ENCODE measurements at regions of chr6 and their contacts with region 1.

Region 1: GRCh38 chr6:31139599-31139998 is 733 bp upstream of the PSORS1C2 start:
- DNase-seq: no peak
- H3K4me3 ChIP-seq: no peak overlapping the region
- H3K27ac ChIP-seq: no peak overlapping the region
- H3K4me1 ChIP-seq: peaks cover 24% of the 10 kb centered on the region
- H3K27me3 ChIP-seq: no peaks in the 10 kb centered on the region
- CTCF ChIP-seq: no peak

Region 2: GRCh38 chr6:30990422-30991086 is 149.0 kb before region 1 on chr6:
- CTCF ChIA-PET with region 1: no interaction called
- dilution Hi-C with region 1: no loop called
- in situ Hi-C with region 1: no loop called
- intact Hi-C with region 1: no loop called
- DNase-seq: no peak
- H3K4me3 ChIP-seq: no peak overlapping the region
- H3K27ac ChIP-seq: no peak overlapping the region
- H3K4me1 ChIP-seq: no peaks in the 10 kb centered on the region
- H3K27me3 ChIP-seq: no peaks in the 10 kb centered on the region
- CTCF ChIP-seq: no peak

Region 3: GRCh38 chr6:31366693-31367470 is 227.3 kb after region 1 on chr6:
- CTCF ChIA-PET with region 1: no interaction called
- dilution Hi-C with region 1: no loop called
- in situ Hi-C with region 1: loop called (anchors 5 to 10 kb)
- intact Hi-C with region 1: loop called (anchors 1 kb)
- DNase-seq: peak; percentile 85
- H3K4me3 ChIP-seq: peak overlapping the region in 2 of 3 experiments; percentile 23 to 44
- H3K27ac ChIP-seq: no peak overlapping the region
- H3K4me1 ChIP-seq: peaks cover 4% of the 10 kb centered on the region
- H3K27me3 ChIP-seq: peaks cover 2% of the 10 kb centered on the region
- CTCF ChIP-seq: peak; percentile 71 to 91

Measured in mammary epithelial cell (primary cell).